ENCODE measurements at regions of chr19 and their contacts with region 1.

Region 1: DNA sequence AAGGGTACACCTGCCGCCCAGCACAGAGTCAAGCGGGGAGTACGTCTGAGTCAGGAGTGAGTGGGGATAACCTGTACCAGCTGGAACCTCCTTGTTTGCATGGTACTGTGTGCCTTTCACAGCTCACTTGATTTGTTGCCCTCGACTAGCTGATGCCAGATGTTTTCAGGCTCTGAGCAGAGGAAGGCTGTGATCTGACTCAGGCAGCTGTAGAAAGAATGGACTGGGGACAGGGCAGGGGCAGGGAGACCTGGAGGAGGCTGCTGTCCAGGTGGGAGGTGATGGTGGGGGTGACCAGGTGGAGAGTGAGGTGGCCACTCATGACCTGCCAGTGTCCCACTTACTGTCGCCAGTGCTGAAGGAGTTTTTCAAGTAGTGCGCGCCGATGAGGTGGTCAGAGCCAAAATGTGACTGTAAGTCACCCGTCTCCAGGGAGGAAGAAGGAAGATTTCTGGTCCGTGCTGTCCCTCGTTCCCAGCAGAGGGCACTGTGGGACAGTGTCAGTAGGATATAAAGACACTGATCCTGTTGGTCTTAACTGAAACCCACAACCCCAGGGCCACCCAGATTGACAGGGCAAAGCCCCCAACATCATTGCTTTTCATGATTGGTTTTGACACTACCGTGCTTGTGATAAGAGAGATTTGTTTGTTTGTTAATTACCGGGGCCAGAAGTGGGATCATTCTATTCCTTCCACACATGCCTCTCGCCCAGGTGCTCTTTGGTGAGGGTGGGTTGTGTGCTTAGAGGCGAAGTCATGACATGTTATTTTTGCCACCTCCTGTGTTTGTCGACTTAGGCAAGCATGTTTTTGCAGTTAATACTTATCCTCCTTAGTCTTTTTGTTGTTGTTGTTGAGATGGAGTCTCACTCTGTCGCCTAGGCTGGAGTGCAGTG is 128.4 kb downstream of the DPF1 start:
- DNase-seq: no peak
- H3K4me3 ChIP-seq: no peak overlapping the region
- CTCF ChIP-seq: peak; percentile 79

Region 2: GRCh38 chr19:37896180-37896579 is 199.5 kb before region 1 on chr19:
- CTCF ChIA-PET with region 1: interaction called, 29 read pairs
- POLR2A ChIA-PET with region 1: no interaction called
- DNase-seq: no peak
- H3K4me3 ChIP-seq: no peak overlapping the region
- CTCF ChIP-seq: no peak

Region 3: GRCh38 chr19:38049105-38049649 is 46.5 kb before region 1 on chr19:
- CTCF ChIA-PET with region 1: no interaction called
- POLR2A ChIA-PET with region 1: no interaction called
- DNase-seq: no peak
- H3K4me3 ChIP-seq: no peak overlapping the region
- CTCF ChIP-seq: no peak

Region 4: DNA sequence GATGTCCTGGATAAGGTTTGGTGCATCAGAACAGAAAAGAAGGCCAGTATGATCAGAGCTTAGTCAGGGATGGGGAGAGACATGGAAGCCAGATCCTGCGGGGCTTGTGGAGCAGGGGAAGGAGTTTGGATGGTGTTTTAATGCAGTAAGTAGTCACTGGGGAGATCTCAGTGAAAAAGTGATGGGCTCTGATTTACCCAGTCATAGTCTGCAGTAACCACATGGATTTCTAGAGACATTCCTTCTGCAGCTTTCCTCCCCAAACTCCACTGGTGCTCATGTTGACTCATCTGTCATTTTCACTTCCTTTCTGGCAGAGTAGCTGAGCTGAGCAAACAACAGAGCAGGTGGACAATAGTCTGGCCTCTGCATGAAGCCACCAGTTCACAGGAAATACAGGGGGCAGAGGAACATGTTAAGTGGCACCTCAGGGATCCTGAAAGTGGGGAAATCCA is 15.7 kb before region 1 on chr19:
- CTCF ChIA-PET with region 1: interaction called, 16 read pairs
- POLR2A ChIA-PET with region 1: no interaction called
- DNase-seq: peak; percentile 70
- H3K4me3 ChIP-seq: no peak overlapping the region
- CTCF ChIP-seq: no peak

Region 5: GRCh38 chr19:38107129-38107528 is 11.5 kb after region 1 on chr19:
- CTCF ChIA-PET with region 1: interaction called, 17 read pairs
- POLR2A ChIA-PET with region 1: no interaction called
- DNase-seq: no peak
- H3K4me3 ChIP-seq: no peak overlapping the region
- CTCF ChIP-seq: no peak

Region 6: DNA sequence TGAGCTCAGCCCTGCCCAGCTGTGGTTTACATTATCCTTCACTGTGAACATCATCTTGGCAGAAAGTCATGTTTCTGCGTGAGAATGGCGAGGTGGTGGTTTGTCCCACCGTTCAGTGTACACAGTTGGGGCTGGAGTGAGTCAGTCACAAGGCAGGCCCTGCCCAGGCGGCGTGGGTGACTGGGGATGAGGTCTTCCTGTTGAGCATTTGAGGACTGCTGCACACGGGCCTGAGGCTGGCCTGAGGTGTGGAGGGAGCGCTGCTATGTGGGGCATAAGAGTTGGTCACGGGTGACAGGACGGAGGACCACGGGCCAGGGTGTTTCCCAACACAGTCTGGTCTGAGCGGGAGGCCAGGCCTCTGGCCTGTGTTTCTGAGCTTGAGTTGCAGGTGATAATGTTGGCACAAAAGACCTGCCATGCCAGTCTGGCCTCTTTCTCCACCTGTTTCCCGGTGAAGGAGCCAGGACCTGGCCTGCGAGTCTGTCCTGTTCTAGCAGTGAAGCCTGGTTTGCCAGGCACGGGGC is 195.0 kb after region 1 on chr19:
- CTCF ChIA-PET with region 1: no interaction called
- POLR2A ChIA-PET with region 1: no interaction called
- DNase-seq: peak; percentile 71
- H3K4me3 ChIP-seq: no peak overlapping the region
- CTCF ChIP-seq: no peak

Measured in AG04449 (cell line).